PC-9 (cell line): ENCODE measurements at regions of chr5 and their contacts with region 1.

Region 1: DNA sequence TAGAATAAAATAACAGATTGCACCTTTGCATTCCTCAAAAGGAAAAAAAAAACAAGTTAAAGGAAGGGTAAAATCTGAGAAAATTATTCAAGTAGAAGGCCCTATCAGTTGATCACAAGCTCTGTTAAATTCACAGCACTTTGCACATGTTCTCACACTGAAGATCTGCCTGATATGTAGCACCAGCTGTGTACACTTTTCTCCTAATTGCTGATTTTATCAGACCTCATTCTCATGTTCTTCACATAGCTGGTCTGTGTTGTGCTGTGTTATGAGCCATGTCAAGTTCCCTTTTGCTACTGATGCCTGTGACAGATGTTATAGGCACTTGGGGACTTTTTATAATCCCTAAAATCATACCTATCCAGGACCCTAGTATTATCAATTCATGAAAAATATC is 390.4 kb upstream of the PRR16 start:
- DNase-seq: no peak
- H3K4me3 ChIP-seq: no peak overlapping the region
- H3K27ac ChIP-seq: no peak overlapping the region
- H3K4me1 ChIP-seq: no peaks in the 10 kb centered on the region
- H3K27me3 ChIP-seq: no peaks in the 10 kb centered on the region
- CTCF ChIP-seq: no peak

Region 2: GRCh38 chr5:120225524-120225923 is 151.8 kb after region 1 on chr5:
- CTCF ChIA-PET with region 1: no interaction called
- POLR2A ChIA-PET with region 1: no interaction called
- intact Hi-C with region 1: no loop called
- DNase-seq: no peak
- H3K4me3 ChIP-seq: no peak overlapping the region
- H3K27ac ChIP-seq: no peak overlapping the region
- H3K4me1 ChIP-seq: no peaks in the 10 kb centered on the region
- H3K27me3 ChIP-seq: no peaks in the 10 kb centered on the region
- CTCF ChIP-seq: no peak

Region 3: DNA sequence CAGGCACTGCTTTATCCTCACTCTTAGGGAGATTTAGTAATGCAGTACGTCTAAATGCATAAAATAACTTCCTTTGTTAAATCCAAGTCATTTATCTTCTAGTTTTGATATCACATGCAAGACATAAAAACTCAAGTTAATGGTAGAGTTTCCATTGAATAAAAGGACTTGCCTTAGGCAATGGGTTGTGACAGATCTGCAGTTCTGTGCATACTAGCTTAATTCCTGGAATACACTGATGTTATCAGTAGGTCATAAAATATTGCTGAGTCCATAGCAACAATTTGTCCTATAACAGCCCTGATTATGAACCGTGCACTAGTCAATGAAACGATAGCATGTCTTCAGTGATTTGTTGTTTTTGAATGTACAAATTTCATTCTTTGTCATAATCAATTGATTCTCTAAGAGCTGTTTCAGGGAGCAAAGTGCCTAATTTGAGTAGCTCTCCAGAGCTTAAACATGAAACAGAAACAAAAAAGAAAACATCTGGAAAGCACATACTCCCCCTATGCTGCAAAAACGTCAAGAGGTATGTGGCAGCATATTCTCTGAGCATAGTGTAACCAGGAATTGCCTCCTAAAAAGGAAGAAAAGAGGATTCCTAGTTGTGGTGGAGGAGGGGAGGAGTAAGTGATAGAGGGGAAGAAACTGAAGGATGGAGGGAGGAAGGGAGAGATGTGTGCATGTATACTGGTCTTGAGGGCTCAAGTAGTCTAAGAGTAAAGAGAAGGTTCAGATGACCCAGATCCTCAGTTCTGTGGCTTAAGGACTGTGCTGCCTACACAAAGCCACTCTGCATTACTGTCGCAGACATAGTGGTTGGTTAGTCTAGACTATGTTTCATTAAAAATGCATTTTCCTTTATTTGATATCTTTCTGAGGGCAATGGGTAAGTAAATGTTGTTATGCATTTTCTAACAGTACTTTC is 979.6 kb after region 1 on chr5:
- CTCF ChIA-PET with region 1: no interaction called
- POLR2A ChIA-PET with region 1: interaction called, 10 read pairs
- intact Hi-C with region 1: no loop called
- DNase-seq: no peak
- H3K4me3 ChIP-seq: no peak overlapping the region
- H3K27ac ChIP-seq: no peak overlapping the region
- H3K4me1 ChIP-seq: no peaks in the 10 kb centered on the region
- H3K27me3 ChIP-seq: no peaks in the 10 kb centered on the region
- CTCF ChIP-seq: no peak